ENCODE measurements at regions of chr15 and their contacts with region 1.

Region 1: DNA sequence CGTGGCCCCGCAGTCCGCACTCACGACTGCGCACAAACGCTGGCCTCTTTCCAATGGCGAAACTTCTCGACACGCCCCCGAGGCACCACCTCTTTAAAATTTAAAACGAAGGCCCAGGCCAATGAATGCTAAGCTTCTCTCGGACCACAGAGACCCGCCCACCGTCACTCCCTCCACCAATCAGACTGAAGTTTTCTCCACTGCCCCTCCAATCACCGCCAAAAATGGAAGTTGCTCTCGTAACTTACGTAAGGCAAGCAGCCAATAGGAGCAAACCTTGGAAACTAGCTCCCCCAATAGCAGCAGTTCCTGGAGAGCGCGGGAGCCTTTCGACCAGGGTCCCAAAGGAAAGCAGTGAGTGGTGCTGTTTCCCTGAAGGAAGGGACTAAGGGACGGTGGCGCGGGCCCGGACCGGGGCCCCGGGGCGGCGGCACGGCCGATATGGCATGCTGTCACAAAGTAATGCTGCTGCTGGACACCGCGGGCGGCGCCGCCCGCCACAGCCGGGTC is at the start of gene TICRR:
- DNase-seq: peak; percentile 69 to 98 (median 97)
- ATAC-seq: peak; percentile 99
- H3K4me3 ChIP-seq: peak within 1 kb of the TSS; percentile 86
- H3K4me3 Mint-ChIP-seq: peak within 1 kb of the TSS; percentile 77 to 96 (median 86)
- H3K27ac ChIP-seq: peak within 1 kb of the TSS; percentile 34
- H3K27ac Mint-ChIP-seq: peak within 1 kb of the TSS; percentile 52 to 87 (median 74)
- H3K4me1 ChIP-seq: no peaks in the 10 kb centered on the region
- H3K4me1 Mint-ChIP-seq: peaks cover 0 to 38% (median 8%) of the 10 kb centered on the region in 7 donors
- H3K27me3 ChIP-seq: no peaks in the 10 kb centered on the region
- H3K27me3 Mint-ChIP-seq: peaks cover 9 to 25% (median 13%) of the 10 kb centered on the region in 5 donors
- total RNA-seq, gene TICRR: 0.11 to 15.5 (median 0.19) TPM

Region 2: DNA sequence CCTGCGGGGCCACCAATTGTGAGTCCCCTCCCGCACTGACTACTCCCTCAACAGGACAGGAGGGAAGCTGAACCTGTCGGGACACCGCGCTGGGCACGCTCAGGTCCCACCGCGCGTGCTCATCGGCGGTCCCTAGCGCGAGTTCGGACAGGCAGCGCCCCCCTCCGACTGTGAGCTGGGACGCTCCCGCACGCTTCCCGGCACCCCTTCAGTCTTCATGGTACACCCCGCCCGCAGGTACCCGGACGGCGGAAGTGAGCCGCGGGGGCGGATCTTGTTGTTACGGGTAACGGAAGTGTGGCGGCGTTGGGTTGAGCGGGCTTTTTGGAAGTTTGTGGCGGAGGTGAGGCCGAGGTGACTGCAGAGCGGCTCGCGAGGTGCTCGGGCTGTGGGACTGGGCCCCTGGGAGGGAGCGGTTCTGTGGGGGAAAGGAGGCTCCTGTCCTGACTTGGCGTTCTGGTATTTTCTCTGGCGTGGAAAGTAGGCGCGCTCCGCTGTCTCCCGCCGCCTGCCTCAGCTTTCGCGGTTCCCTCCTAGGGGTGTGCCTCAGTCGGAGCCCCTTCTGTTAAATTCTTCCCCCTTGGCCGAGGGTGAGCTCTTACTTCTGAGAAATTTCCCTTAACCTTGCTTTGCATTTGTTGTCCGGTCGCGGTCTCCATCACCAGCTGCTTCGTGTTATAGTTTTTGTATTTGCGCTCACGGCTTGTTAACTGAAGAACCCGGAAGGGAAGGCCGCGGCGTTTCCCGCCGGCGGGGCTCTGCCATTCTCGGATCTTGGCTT is 331.3 kb before region 1 on chr15 and contains the start of gene FANCI:
- CTCF ChIA-PET with region 1: no interaction called
- POLR2A ChIA-PET with region 1: no interaction called
- intact Hi-C with region 1: loop called in 1 of 2 experiments (anchors 5 kb)
- DNase-seq: peak; percentile 89 to 97 (median 94)
- ATAC-seq: peak; percentile 100
- H3K4me3 ChIP-seq: peak within 1 kb of the TSS; percentile 79
- H3K4me3 Mint-ChIP-seq: peak within 1 kb of the TSS; percentile 86 to 98 (median 94)
- H3K27ac ChIP-seq: peak within 1 kb of the TSS; percentile 65
- H3K27ac Mint-ChIP-seq: peak within 1 kb of the TSS; percentile 78 to 96 (median 84)
- H3K4me1 ChIP-seq: peaks cover 6 to 13% of the 10 kb centered on the region in 2 donors
- H3K4me1 Mint-ChIP-seq: peaks cover 20 to 40% (median 26%) of the 10 kb centered on the region in 7 donors
- H3K27me3 ChIP-seq: no peaks in the 10 kb centered on the region
- H3K27me3 Mint-ChIP-seq: peaks cover 0 to 8% (median 0%) of the 10 kb centered on the region in 5 donors
- total RNA-seq, gene FANCI: 8.0 to 132 (median 9.7) TPM

Region 3: GRCh38 chr15:89614164-89614563 is 39.0 kb after region 1 on chr15:
- CTCF ChIA-PET with region 1: no interaction called
- POLR2A ChIA-PET with region 1: no interaction called
- intact Hi-C with region 1: no loop called
- DNase-seq: no peak
- ATAC-seq: no peak
- H3K4me3 ChIP-seq: no peak overlapping the region
- H3K4me3 Mint-ChIP-seq: no peak overlapping the region
- H3K27ac ChIP-seq: no peak overlapping the region
- H3K27ac Mint-ChIP-seq: no peak overlapping the region
- H3K4me1 ChIP-seq: no peaks in the 10 kb centered on the region
- H3K4me1 Mint-ChIP-seq: peaks cover 0 to 3% (median 0%) of the 10 kb centered on the region in 7 donors
- H3K27me3 ChIP-seq: no peaks in the 10 kb centered on the region
- H3K27me3 Mint-ChIP-seq: no peaks in the 10 kb centered on the region

Region 4: GRCh38 chr15:89673165-89673512 is 97.9 kb after region 1 on chr15:
- CTCF ChIA-PET with region 1: no interaction called
- POLR2A ChIA-PET with region 1: no interaction called
- intact Hi-C with region 1: no loop called
- DNase-seq: no peak
- ATAC-seq: peak; percentile 44
- H3K4me3 ChIP-seq: no peak overlapping the region
- H3K4me3 Mint-ChIP-seq: no peak overlapping the region
- H3K27ac ChIP-seq: no peak overlapping the region
- H3K27ac Mint-ChIP-seq: no peak overlapping the region
- H3K4me1 ChIP-seq: no peaks in the 10 kb centered on the region
- H3K4me1 Mint-ChIP-seq: peaks cover 0 to 8% (median 0%) of the 10 kb centered on the region in 7 donors
- H3K27me3 ChIP-seq: no peaks in the 10 kb centered on the region
- H3K27me3 Mint-ChIP-seq: peaks cover 0 to 6% (median 4%) of the 10 kb centered on the region in 5 donors

Region 5: GRCh38 chr15:89690276-89691218 is 115.3 kb after region 1 on chr15 and contains the starts of genes PEX11A and WDR93:
- CTCF ChIA-PET with region 1: no interaction called
- POLR2A ChIA-PET with region 1: no interaction called
- intact Hi-C with region 1: loop called (anchors 1 to 2 kb)
- DNase-seq: peak; percentile 59 to 80 (median 74)
- ATAC-seq: peak; percentile 93
- H3K4me3 ChIP-seq: peak within 1 kb of the TSS; percentile 92
- H3K4me3 Mint-ChIP-seq: peak within 1 kb of the TSS; percentile 78 to 94 (median 92)
- H3K27ac ChIP-seq: peak within 1 kb of the TSS; percentile 56
- H3K27ac Mint-ChIP-seq: peak within 1 kb of the TSS; percentile 74 to 93 (median 89)
- H3K4me1 ChIP-seq: peaks cover 0 to 3% of the 10 kb centered on the region in 2 donors
- H3K4me1 Mint-ChIP-seq: peaks cover 13 to 24% (median 15%) of the 10 kb centered on the region in 7 donors
- H3K27me3 ChIP-seq: no peaks in the 10 kb centered on the region
- H3K27me3 Mint-ChIP-seq: peaks cover 0 to 11% (median 0%) of the 10 kb centered on the region in 5 donors
- total RNA-seq, gene PEX11A: 0.92 to 4.6 (median 2.0) TPM
- total RNA-seq, gene WDR93: 0.27 TPM in 1 of 5 experiments, not detected in the others

Region 6: GRCh38 chr15:89750560-89751542 is 175.7 kb after region 1 on chr15 and contains the start of gene MESP1:
- CTCF ChIA-PET with region 1: no interaction called
- POLR2A ChIA-PET with region 1: no interaction called
- intact Hi-C with region 1: loop called in 1 of 2 experiments (anchors 2 kb)
- DNase-seq: peak; percentile 71 to 89 (median 82)
- ATAC-seq: peak; percentile 94
- H3K4me3 ChIP-seq: peak within 1 kb of the TSS; percentile 64
- H3K4me3 Mint-ChIP-seq: peak within 1 kb of the TSS; percentile 63 to 83 (median 77)
- H3K27ac ChIP-seq: peak within 1 kb of the TSS; percentile 31
- H3K27ac Mint-ChIP-seq: peak within 1 kb of the TSS in 3 of 9 donors; percentile 25 to 63 (median 53)
- H3K4me1 ChIP-seq: no peaks in the 10 kb centered on the region
- H3K4me1 Mint-ChIP-seq: peaks cover 0 to 8% (median 3%) of the 10 kb centered on the region in 7 donors
- H3K27me3 ChIP-seq: no peaks in the 10 kb centered on the region
- H3K27me3 Mint-ChIP-seq: peaks cover 0 to 50% (median 15%) of the 10 kb centered on the region in 5 donors
- total RNA-seq, gene MESP1: 0.38 to 1.2 (median 0.50) TPM in 3 of 5 experiments, not detected in the others